ENCODE measurements at regions of chr18 and their contacts with region 1.

Region 1: DNA sequence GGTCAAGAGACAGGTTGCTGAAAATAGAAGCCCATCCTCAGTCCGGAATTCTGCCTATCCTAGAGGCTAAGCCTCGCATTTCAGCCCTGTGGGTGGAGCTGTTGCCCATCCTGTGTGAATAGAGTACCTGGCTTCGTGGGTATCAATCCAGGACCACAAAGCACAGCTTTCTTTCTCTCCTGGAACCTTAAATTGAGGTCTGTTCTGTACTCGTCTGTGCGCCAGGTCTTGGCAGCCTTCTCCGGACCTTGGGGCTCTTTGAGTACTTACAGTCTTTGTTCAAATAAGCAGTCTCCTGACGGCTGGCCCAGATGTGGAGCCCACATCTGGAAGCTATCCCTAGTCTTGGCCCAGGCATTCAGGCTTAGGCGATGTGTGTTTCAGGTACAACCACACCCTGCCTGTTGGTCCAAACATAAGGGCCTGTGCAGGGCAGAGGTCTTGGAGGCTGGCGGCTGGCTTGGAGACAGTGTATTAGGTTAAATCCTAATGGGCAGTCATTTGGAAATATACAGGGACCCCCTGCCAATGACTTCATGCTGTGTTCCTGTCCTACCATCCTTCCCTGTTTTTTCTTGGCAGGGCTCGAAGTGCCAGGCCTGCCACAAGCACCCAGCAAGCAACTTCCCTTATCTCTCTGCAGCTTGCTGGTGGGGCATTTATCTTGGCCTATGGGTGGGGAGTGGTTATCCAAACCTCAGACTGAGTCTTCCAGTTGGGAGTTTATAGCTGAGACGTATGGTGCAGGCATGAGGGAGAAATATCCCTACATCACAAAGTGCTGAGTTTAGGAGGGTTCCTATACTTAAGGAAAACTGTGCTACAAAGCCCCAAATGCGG is 294.1 kb downstream of the BCL2 start:
- DNase-seq: peak; percentile 31 to 75
- H3K4me3 ChIP-seq: no peak overlapping the region
- H3K4me1 ChIP-seq: no peaks in the 10 kb centered on the region
- H3K27me3 ChIP-seq: no peaks in the 10 kb centered on the region

Region 2: GRCh38 chr18:63141778-63142176 is 116.3 kb after region 1 on chr18:
- in situ Hi-C with region 1: loop called (anchors 10 kb)
- DNase-seq: no peak
- H3K4me3 ChIP-seq: no peak overlapping the region
- H3K4me1 ChIP-seq: peaks cover 9% of the 10 kb centered on the region
- H3K27me3 ChIP-seq: no peaks in the 10 kb centered on the region

Measured in HAP-1 (cell line).